WTC11 (cell line): ENCODE measurements at regions of chr7 and their contacts with region 1.

Region 1: DNA sequence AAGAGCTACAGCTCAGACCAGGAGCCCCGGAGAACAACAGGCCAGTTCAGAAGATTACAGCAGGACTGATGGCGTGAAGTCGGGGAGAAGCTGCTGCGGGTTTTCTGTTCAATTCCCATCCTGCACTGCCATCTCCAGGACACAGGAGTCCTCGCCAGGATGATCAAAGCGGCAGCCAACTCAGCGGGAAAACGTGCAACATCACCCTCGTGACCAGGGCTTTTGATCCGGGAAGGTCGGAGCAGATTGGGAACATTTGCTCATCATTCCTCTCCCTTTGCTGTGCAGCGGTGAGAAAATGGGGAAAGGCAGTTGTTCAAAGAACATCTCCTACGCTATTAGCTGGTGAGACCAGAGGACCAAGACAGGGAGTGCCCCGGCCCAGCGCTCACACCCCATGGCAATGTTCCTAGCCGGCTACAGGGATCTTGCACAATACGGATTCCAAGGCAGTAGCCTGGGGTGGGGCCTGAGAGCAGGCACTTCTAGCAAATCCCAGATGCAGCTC is 50.4 kb upstream of the FOXK1 start:
- DNase-seq: peak; percentile 67
- ATAC-seq: peak; percentile 88
- H3K4me3 Mint-ChIP-seq: peak overlapping the region; percentile 60
- H3K27ac Mint-ChIP-seq: no peak overlapping the region
- H3K4me1 Mint-ChIP-seq: peaks cover 8% of the 10 kb centered on the region
- H3K27me3 Mint-ChIP-seq: peaks cover 70% of the 10 kb centered on the region
- CTCF ChIP-seq: 0 out of 2 replicates have a peak, but pooled peaks have one; percentile 17

Region 2: GRCh38 chr7:4226525-4226884 is 405.2 kb before region 1 on chr7:
- CTCF ChIA-PET with region 1: interaction called, 17 read pairs
- POLR2A ChIA-PET with region 1: no interaction called
- DNase-seq: peak; percentile 68
- ATAC-seq: peak; percentile 99
- H3K4me3 Mint-ChIP-seq: no peak overlapping the region
- H3K27ac Mint-ChIP-seq: peak overlapping the region; percentile 66; the same call in 1 of the 2 replicates
- H3K4me1 Mint-ChIP-seq: no peaks in the 10 kb centered on the region
- H3K27me3 Mint-ChIP-seq: no peaks in the 10 kb centered on the region
- CTCF ChIP-seq: peak; percentile 52; the same call in 1 of the 2 replicates

Region 3: DNA sequence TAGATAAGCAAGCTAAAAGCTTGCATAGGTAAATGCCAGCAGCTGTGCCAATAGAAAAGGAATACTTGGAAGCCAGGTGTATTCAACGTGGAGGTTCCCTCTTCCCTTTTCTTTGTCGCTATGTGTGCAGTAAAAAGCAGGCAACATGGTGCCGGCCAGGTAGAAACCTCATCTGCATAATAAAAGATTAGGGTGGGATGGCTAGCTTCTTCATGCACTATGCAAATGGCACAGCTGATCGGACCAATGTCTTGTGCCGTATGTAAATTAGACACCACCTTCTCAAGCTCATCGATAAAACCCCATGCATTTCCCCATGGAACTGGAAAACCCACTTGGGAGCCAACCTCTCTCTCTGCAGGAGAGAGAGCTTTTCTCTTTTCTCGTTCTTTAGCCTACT is 100.5 kb before region 1 on chr7:
- CTCF ChIA-PET with region 1: interaction called, 10 read pairs
- POLR2A ChIA-PET with region 1: no interaction called
- DNase-seq: peak; percentile 25
- ATAC-seq: peak; percentile 90
- H3K4me3 Mint-ChIP-seq: peak overlapping the region; percentile 29
- H3K27ac Mint-ChIP-seq: peak overlapping the region; percentile 82
- H3K4me1 Mint-ChIP-seq: peaks cover 46% of the 10 kb centered on the region
- H3K27me3 Mint-ChIP-seq: no peaks in the 10 kb centered on the region; the same call in 1 of the 2 replicates
- CTCF ChIP-seq: no peak

Region 4: DNA sequence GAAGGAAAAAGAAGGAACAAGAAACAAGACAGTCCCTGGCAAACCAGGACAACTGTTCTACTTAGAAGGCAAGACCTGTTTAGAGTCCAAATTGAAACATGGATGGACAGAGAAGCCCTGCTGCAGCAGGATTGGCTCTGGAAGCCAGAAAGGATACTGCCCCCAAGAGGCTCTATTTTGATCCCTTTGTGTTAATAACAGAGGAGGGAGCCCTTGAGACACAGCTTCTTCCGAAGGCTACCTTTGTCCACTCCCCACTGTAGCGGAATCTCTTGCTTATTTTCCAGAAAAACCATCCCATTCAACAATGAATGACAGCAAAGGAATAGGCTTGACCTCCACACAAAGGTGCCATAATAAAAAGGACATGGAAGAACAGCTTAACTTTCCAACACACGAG is 69.9 kb before region 1 on chr7:
- CTCF ChIA-PET with region 1: interaction called, 12 read pairs
- POLR2A ChIA-PET with region 1: no interaction called
- DNase-seq: no peak
- ATAC-seq: peak; percentile 86
- H3K4me3 Mint-ChIP-seq: no peak overlapping the region
- H3K27ac Mint-ChIP-seq: no peak overlapping the region
- H3K4me1 Mint-ChIP-seq: peaks cover 11% of the 10 kb centered on the region
- H3K27me3 Mint-ChIP-seq: no peaks in the 10 kb centered on the region; the same call in 1 of the 2 replicates
- CTCF ChIP-seq: no peak

Region 5: GRCh38 chr7:4610768-4611467 is 20.8 kb before region 1 on chr7:
- CTCF ChIA-PET with region 1: interaction called, 24 read pairs
- POLR2A ChIA-PET with region 1: no interaction called
- DNase-seq: peak; percentile 36
- ATAC-seq: peak; percentile 74
- H3K4me3 Mint-ChIP-seq: no peak overlapping the region
- H3K27ac Mint-ChIP-seq: no peak overlapping the region
- H3K4me1 Mint-ChIP-seq: peaks cover 14% of the 10 kb centered on the region
- H3K27me3 Mint-ChIP-seq: peaks cover 4% of the 10 kb centered on the region; the same call in 1 of the 2 replicates
- CTCF ChIP-seq: peak; percentile 53

Region 6: DNA sequence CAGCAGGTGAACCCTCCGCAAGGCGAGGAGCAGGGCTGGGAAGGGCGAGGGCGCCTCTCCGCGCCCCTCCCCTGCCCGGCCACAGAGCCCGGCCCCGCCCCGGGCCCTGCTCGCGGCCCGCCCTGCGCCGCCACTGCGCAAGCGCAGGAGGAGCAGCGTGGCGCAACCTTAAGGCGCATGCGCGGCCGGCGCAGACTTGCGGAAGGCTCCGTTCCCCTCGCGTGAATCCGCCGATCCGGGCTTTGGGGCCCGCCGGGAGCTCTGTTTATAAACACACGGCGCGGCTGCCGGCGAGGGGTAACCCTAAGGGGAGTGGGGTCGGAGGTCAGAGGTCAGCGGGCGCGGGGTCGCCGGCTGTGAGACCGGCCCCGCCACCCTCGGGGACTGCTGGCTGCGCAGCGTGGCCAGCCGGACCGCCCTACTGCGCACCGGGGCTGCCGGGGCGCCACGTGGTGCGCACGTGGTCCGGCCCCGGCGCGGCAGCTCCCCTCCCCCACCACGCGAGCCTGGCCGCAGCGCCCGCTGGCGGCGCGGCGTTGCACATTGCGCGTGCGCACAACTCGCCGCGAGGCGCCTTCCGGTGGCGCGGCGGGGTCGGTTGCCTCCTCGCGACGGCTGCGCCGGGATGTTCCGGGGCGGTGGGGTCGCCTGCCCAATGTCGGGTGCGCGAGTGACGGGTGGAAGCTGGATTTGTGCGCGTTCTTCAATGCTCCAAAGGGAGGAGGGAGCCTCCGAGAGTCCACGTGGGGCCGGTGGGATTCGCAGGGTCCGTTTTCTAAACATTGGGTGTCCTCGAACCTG is 10.1 kb after region 1 on chr7:
- CTCF ChIA-PET with region 1: interaction called, 11 read pairs
- POLR2A ChIA-PET with region 1: no interaction called
- DNase-seq: peak; percentile 90
- ATAC-seq: peak; percentile 95
- H3K4me3 Mint-ChIP-seq: peak overlapping the region; percentile 73
- H3K27ac Mint-ChIP-seq: no peak overlapping the region
- H3K4me1 Mint-ChIP-seq: peaks cover 2% of the 10 kb centered on the region; the same call in 1 of the 2 replicates
- H3K27me3 Mint-ChIP-seq: peaks cover 39% of the 10 kb centered on the region
- CTCF ChIP-seq: no peak